ENCODE measurements at regions of chr17 and their contacts with region 1.

Region 1: DNA sequence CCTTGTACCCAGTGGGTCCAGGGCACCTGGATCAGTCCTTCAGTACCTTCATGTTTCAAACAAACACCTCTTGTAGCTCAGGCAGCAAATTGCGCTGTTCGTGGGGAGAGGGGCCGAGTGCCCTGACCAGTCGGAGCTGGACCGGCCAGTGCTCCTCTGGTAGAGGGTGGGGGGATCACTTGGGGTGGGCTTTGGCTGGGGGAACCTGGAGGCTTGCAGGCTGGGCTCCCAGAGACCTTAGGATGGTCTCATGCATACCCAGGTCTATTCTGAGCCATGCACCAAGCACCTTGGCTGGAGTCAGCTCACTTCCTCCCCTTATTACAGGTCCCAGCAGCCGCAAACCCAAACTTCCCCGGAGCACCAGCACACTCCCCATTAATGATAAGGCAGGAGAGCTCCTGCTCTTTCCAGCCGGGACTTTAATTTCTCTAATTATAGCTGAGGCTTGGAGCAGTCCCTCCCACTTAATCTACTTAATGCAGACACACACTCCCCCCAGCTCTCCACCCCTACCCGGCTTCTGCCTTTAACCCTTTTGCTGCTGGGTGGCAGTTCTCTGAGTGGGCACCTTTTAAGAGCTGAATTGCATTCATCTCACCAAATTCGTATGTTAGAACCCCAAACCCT is 26.3 kb upstream of the MGAT5B start:
- DNase-seq: no peak
- ATAC-seq: peak; percentile 67
- H3K4me3 ChIP-seq: no peak overlapping the region
- H3K27ac ChIP-seq: no peak overlapping the region
- H3K4me1 ChIP-seq: peaks cover 6% of the 10 kb centered on the region; the same call in 1 of the 2 replicates
- H3K27me3 ChIP-seq: peaks cover 2% of the 10 kb centered on the region; the same call in 1 of the 2 replicates
- CTCF ChIP-seq: no peak

Region 2: GRCh38 chr17:76862494-76862893 is 20.6 kb after region 1 on chr17:
- CTCF ChIA-PET with region 1: no interaction called
- POLR2A ChIA-PET with region 1: no interaction called
- in situ Hi-C with region 1: no loop called
- intact Hi-C with region 1: no loop called
- DNase-seq: no peak
- ATAC-seq: no peak
- H3K4me3 ChIP-seq: no peak overlapping the region
- H3K27ac ChIP-seq: no peak overlapping the region
- H3K4me1 ChIP-seq: peaks cover 6% of the 10 kb centered on the region
- H3K27me3 ChIP-seq: no peaks in the 10 kb centered on the region
- CTCF ChIP-seq: no peak

Region 3: GRCh38 chr17:77109764-77110359 is 268.0 kb after region 1 on chr17:
- CTCF ChIA-PET with region 1: interaction called, 13 read pairs
- POLR2A ChIA-PET with region 1: no interaction called
- in situ Hi-C with region 1: no loop called
- intact Hi-C with region 1: no loop called
- DNase-seq: no peak
- ATAC-seq: no peak
- H3K4me3 ChIP-seq: no peak overlapping the region
- H3K27ac ChIP-seq: peak overlapping the region; percentile 86
- H3K4me1 ChIP-seq: peaks cover 18% of the 10 kb centered on the region
- H3K27me3 ChIP-seq: no peaks in the 10 kb centered on the region
- CTCF ChIP-seq: no peak

Region 4: GRCh38 chr17:77140166-77140878 is 298.4 kb after region 1 on chr17:
- CTCF ChIA-PET with region 1: no interaction called
- POLR2A ChIA-PET with region 1: no interaction called
- in situ Hi-C with region 1: no loop called
- intact Hi-C with region 1: no loop called
- DNase-seq: peak; percentile 62
- ATAC-seq: peak; percentile 92
- H3K4me3 ChIP-seq: peak overlapping the region; percentile 46 to 50
- H3K27ac ChIP-seq: peak overlapping the region; percentile 96
- H3K4me1 ChIP-seq: peaks cover 40% of the 10 kb centered on the region
- H3K27me3 ChIP-seq: no peaks in the 10 kb centered on the region
- CTCF ChIP-seq: no peak